Endothelial cell of umbilical vein (primary cell): ENCODE measurements at regions of chr13 and their contacts with region 1.

Region 1: DNA sequence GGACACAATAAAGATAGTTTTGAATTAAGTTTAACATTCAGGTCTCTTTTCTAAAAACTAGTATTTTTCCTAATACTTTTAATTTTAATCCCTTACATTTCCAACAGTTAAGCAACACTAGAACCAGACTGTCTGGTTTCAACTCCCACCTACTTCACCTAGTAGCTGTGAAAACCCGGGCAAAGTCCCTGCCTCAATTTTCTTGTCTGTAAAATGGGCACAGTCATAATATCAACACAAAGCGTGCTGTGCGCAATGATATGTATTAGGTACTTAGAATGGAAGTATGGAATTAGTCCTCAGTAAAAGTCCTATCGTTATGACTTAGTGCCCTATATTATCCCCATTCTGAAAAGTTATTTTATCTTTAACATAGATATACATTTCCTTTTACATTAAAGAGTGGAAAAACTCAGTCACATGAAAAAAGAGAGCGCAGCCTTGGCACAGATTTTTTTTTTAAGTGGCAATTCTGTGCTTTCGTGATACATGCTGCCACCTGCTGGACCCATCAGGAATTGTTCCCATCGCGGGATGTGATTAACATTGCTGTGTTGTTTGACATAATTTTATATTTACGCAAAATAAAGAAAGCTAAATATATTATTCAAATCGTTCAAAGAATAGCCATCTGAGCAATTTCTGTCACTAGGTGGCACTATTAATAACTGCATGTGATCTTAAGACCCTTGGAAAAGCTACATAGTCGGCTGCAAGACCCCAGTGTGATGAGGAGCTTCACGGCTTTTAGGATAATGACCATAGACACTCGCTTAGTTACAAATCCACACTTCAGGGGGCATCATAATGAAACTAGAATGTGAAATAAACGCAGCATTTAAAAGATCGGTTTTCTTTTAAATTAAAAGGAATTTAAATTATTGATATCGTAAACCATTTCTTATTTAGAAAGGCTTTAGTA is 59.9 kb downstream of the LIG4 start:
- DNase-seq: peak; percentile 60
- H3K4me3 ChIP-seq: no peak overlapping the region
- H3K27ac ChIP-seq: no peak overlapping the region
- H3K4me1 ChIP-seq: no peaks in the 10 kb centered on the region
- H3K27me3 ChIP-seq: no peaks in the 10 kb centered on the region
- CTCF ChIP-seq: peak; percentile 72 to 79
- POLR2A ChIP-seq: no peak

Region 2: DNA sequence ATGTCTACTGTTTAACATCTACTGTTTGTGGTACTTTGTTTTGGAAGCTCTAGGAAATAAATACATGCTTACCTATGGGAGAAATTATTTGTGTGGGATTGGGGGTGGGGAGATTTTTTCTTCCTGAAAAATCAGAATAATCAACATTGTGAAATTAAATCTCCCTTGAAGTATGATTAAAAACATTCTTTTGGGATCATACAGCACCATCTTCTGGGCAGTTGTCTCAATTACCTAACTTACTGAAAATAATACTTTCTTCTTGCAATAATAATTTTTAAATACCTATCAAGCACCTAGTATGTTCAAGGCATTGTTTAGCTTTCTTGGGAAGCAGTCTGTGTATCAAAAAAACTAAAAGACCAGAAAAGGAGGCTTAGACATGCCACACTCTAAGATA is 1011.0 kb before region 1 on chr13:
- CTCF ChIA-PET with region 1: interaction called, 3 read pairs
- POLR2A ChIA-PET with region 1: no interaction called
- dilution Hi-C with region 1: no loop called
- intact Hi-C with region 1: loop called (anchors 10 kb)
- DNase-seq: peak; percentile 60
- H3K4me3 ChIP-seq: no peak overlapping the region
- H3K27ac ChIP-seq: no peak overlapping the region
- H3K4me1 ChIP-seq: no peaks in the 10 kb centered on the region
- H3K27me3 ChIP-seq: peaks cover 0 to 1% of the 10 kb centered on the region in 2 experiments
- CTCF ChIP-seq: peak in 1 of 2 donors; percentile 5
- POLR2A ChIP-seq: no peak

Region 3: GRCh38 chr13:107211073-107211472 is 944.4 kb before region 1 on chr13:
- CTCF ChIA-PET with region 1: interaction called, 45 read pairs
- POLR2A ChIA-PET with region 1: no interaction called
- dilution Hi-C with region 1: no loop called
- intact Hi-C with region 1: loop called (anchors 1 kb)
- DNase-seq: peak; percentile 92
- H3K4me3 ChIP-seq: no peak overlapping the region
- H3K27ac ChIP-seq: no peak overlapping the region
- H3K4me1 ChIP-seq: peaks cover 13% of the 10 kb centered on the region
- H3K27me3 ChIP-seq: no peaks in the 10 kb centered on the region
- CTCF ChIP-seq: peak; percentile 84 to 92
- POLR2A ChIP-seq: no peak

Region 4: DNA sequence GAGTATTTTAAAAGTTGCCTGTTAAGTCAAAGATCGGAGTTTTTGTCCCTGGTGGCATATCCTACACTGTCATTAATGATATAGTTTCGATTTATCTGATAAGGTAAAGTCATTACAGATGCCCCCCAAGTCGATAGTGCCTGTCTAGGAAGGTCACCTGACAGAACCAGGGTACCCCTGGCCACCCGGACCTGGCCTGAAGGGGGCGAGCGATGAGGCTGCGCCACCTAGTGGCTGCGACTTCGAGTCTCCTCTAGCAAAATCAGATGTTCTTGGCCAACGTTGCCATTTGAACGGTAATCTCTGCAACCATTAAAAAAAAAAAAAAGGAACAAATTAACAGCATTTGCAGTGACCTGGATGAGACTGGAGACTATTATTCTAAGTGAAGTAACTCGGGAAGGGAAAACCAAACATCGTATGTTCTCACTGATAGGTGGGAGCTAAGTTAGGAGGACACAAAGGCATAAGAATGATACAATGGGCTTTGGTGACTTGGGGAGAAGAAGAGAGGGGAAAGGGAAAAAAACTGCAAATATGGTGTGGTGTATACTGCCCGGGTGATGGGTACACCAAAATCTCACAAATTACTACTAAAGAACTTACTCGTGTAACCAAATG is 505.3 kb before region 1 on chr13:
- CTCF ChIA-PET with region 1: interaction called, 3 read pairs
- POLR2A ChIA-PET with region 1: no interaction called
- dilution Hi-C with region 1: no loop called
- intact Hi-C with region 1: loop called (anchors 10 kb)
- DNase-seq: peak; percentile 78
- H3K4me3 ChIP-seq: no peak overlapping the region
- H3K27ac ChIP-seq: no peak overlapping the region
- H3K4me1 ChIP-seq: peaks cover 4% of the 10 kb centered on the region
- H3K27me3 ChIP-seq: no peaks in the 10 kb centered on the region
- CTCF ChIP-seq: peak; percentile 82 to 93
- POLR2A ChIP-seq: no peak

Region 5: DNA sequence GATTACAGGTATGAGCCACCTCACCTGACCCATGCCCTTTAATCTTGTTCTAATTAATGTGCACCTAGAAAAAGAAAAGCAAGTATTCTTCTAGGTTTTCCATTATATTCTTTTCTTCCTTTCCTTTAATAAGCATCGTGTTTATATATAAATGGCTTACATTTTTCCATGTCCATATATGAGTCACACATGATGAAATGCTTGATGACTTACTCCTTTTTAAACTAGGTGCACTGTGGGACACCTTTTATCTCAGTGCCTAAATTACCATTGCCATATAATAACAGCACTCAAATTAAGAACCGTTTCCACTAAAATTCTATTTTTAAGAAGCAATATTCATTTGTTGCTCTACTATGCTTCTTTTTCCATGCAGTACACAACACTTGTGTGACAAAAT is 303.4 kb before region 1 on chr13:
- CTCF ChIA-PET with region 1: no interaction called
- POLR2A ChIA-PET with region 1: no interaction called
- dilution Hi-C with region 1: no loop called
- intact Hi-C with region 1: no loop called
- DNase-seq: no peak
- H3K4me3 ChIP-seq: no peak overlapping the region
- H3K27ac ChIP-seq: no peak overlapping the region
- H3K4me1 ChIP-seq: peaks cover 7% of the 10 kb centered on the region
- H3K27me3 ChIP-seq: no peaks in the 10 kb centered on the region
- CTCF ChIP-seq: no peak
- POLR2A ChIP-seq: no peak

Region 6: GRCh38 chr13:108166078-108166477 is 10.6 kb after region 1 on chr13:
- CTCF ChIA-PET with region 1: interaction called, 12 read pairs
- POLR2A ChIA-PET with region 1: no interaction called
- dilution Hi-C with region 1: no loop called
- intact Hi-C with region 1: no loop called
- DNase-seq: no peak
- H3K4me3 ChIP-seq: no peak overlapping the region
- H3K27ac ChIP-seq: no peak overlapping the region
- H3K4me1 ChIP-seq: no peaks in the 10 kb centered on the region
- H3K27me3 ChIP-seq: no peaks in the 10 kb centered on the region
- CTCF ChIP-seq: no peak
- POLR2A ChIP-seq: no peak